ENCODE measurements at regions of chr9 and their contacts with region 1.

Region 1: DNA sequence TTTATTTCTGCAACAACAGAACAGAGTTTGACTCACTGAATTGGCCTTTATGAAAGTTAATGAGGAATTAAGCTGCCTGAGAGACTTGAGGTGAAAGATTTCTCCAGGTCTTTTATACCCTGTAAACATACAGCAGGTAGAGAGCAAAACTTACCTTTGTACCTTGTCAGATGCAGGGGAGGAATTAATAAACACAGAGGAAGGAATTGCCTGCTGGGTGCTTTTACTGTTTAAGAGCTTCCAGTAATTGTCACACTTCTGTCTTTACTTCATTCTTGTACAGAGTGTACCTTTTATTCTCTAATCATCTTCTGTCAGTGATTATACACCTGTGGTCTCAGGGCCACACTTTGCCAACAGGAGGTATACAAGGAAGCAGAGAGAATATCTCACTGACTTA is 94.0 kb upstream of the GRIN3A start:
- DNase-seq: no peak
- H3K4me3 ChIP-seq: no peak overlapping the region
- H3K27ac ChIP-seq: no peak overlapping the region
- H3K4me1 ChIP-seq: no peaks in the 10 kb centered on the region
- H3K27me3 ChIP-seq: no peaks in the 10 kb centered on the region
- CTCF ChIP-seq: no peak
- POLR2A ChIP-seq: no peak

Region 2: DNA sequence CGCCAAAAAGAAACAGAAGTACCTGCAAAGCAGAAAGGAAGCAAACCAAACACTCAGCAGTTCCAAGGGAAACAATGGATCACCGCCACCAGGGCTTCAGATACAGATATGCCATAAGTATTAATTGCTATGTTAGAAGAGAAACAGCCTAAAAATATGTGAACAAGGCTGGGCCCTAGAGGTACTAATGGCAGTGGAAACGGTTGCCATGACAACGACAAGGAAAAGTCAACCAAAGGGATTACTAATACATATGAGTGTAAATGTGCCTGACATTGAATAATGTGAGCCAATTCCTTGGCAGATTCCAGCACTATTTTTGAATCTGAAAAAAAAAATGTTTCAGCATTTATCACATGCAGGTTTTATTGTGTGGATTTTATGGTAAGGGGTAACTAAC is 1179.6 kb before region 1 on chr9:
- intact Hi-C with region 1: no loop called
- DNase-seq: no peak
- H3K4me3 ChIP-seq: no peak overlapping the region
- H3K27ac ChIP-seq: no peak overlapping the region
- H3K4me1 ChIP-seq: no peaks in the 10 kb centered on the region
- H3K27me3 ChIP-seq: no peaks in the 10 kb centered on the region
- CTCF ChIP-seq: no peak
- POLR2A ChIP-seq: no peak

Region 3: DNA sequence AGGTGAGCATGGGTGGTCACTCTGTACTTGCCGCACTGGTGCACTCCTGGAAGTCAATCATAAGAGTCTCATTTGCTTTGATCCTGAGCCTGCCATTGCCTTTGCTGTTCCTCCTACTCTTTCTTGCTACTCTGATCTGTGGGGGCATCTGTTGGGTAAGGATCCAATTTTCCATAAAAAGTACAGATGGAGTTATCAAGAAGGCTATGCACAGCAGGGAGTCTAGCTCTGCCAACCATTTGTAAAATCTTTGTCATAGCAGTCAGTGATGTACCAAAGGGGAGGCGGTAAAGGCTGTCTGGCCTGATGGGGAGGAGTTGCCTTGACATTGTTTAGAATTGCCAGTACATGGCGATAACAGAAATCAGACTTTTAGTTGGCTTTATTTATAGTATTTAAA is 913.0 kb before region 1 on chr9:
- intact Hi-C with region 1: loop called (anchors 5 kb)
- DNase-seq: no peak
- H3K4me3 ChIP-seq: no peak overlapping the region
- H3K27ac ChIP-seq: no peak overlapping the region
- H3K4me1 ChIP-seq: no peaks in the 10 kb centered on the region
- H3K27me3 ChIP-seq: no peaks in the 10 kb centered on the region
- CTCF ChIP-seq: no peak
- POLR2A ChIP-seq: no peak

Region 4: DNA sequence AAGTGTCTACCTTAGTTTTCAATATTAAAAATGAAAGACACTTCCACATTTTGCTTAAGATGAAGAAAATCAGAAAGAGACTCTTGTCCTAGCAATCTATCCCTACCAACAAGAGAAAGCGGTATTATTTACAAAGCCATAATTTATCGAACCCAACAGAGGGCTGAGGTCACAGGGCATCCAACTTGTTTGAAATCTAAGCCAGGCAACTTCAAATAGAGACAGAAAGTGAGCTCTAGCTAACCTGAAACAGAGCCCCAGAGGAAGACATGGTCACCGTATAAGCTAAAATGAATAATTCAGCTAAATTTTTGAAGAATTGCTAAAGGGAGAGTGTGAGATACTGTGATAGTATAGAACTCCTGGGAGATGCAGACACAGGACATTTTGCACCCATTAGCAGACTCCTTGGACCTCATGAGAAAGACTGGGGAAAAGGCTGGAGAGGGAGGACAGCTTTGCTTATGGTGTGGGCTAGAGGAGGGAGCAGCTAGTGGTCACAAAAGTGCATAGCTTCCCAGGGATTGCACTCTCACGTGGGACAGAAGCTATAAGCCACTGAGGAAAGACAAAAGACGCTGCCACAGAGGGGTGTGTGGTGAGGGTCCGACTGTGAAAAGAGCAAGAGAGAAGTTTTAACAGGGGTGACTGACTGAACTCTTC is 530.1 kb after region 1 on chr9:
- intact Hi-C with region 1: no loop called
- DNase-seq: no peak
- H3K4me3 ChIP-seq: no peak overlapping the region
- H3K27ac ChIP-seq: no peak overlapping the region
- H3K4me1 ChIP-seq: no peaks in the 10 kb centered on the region
- H3K27me3 ChIP-seq: no peaks in the 10 kb centered on the region
- CTCF ChIP-seq: no peak
- POLR2A ChIP-seq: no peak